AG04449 (cell line): ENCODE measurements at regions of chr4 and their contacts with region 1.

Region 1: GRCh38 chr4:106369456-106370060 is 980 bp upstream of the GIMD1 start:
- DNase-seq: peak; percentile 53
- H3K4me3 ChIP-seq: no peak overlapping the region
- CTCF ChIP-seq: peak; percentile 52

Region 2: DNA sequence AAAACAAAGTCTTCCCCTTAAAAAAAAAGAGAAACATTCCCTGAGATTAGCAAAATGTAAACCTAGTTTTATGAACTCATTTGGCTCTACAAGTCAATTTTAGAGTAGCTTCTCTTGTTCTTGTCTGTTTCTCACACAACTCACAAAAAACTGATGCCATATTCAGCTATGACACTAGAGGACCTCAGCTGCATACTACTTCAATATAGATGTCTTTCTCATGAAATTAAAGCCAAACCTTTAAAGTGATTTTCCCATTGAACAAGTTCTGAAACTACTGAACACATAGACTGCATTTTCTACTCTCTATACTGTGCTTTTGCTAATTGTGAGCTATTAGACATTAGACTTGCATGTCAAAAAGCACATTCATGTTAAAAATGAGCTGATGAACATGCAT is 103.4 kb before region 1 on chr4:
- CTCF ChIA-PET with region 1: interaction called, 22 read pairs
- POLR2A ChIA-PET with region 1: no interaction called
- DNase-seq: peak; percentile 17
- H3K4me3 ChIP-seq: no peak overlapping the region
- CTCF ChIP-seq: peak; percentile 51

Region 3: GRCh38 chr4:106495476-106495875 is 125.9 kb after region 1 on chr4:
- CTCF ChIA-PET with region 1: interaction called, 53 read pairs
- POLR2A ChIA-PET with region 1: no interaction called
- DNase-seq: peak; percentile 37
- H3K4me3 ChIP-seq: no peak overlapping the region
- CTCF ChIP-seq: no peak

Region 4: DNA sequence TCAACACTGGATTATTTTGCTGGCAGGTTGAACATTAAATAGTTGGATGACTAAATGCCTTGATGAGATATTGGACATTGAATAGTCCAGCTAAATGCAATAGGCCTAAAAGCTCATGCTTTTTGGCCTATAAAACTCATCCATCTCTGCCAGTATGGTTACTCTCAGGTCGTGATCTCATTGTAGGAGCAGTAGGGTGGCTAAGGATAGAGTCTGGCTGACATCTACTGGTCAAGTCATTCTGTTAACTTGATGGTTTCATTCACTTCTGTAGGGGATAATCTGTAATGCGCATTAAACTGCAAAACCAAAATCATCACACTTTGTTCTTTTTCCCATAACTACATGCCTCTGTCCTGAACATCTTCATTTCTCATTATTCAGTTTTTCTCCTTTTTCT is 439.5 kb after region 1 on chr4:
- CTCF ChIA-PET with region 1: interaction called, 47 read pairs
- POLR2A ChIA-PET with region 1: no interaction called
- DNase-seq: no peak
- H3K4me3 ChIP-seq: no peak overlapping the region
- CTCF ChIP-seq: peak; percentile 43

Region 5: DNA sequence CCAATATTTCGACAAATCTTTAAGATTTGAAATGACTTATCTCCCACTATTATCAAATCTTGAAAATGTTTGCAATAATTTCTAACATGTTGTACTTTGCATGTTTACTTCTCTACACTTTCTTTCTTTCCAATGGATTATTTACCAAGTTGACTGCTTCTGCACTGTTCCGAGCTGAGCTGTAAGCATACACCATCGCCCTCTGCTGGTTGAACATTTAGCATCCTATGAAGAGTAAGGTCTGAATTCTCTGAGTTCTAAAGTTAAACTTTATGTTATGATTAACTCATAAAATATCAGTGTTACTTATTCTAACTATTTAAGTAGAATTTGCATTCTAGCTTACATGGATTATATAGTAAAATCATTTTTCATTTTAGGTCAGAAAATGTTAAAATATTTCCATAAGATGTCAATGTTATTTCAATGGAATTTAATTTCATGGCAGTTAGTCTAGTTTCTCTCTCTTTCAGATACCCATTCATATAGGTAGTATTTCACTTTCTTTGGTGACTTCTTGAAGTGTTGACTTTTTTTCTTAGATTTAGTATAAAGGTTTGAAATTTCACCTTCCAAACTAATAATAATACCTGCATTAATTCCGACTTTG is 529.2 kb after region 1 on chr4:
- CTCF ChIA-PET with region 1: interaction called, 44 read pairs
- POLR2A ChIA-PET with region 1: no interaction called
- DNase-seq: peak; percentile 14
- H3K4me3 ChIP-seq: no peak overlapping the region
- CTCF ChIP-seq: peak; percentile 62